ENCODE measurements at regions of chr5 and their contacts with region 1.

Region 1: DNA sequence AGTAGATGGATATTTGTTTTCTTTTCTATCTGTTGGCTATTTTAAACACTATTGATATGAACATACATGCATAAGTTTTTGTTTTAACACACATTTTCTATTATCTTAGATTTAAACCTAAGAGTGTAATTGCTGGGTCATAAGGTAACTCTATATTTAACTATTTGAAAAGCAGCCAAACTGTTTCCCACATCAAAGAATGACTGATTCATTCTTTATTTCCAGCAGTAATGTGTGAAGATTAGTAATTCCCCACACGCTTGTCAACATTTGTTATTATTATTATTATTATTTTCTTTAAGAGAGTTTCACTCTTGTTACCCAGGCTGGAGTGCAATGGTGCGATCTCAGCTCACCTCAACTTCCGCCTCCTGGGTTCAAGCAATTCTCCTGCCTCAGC is 1495.8 kb downstream of the EFNA5 start:
- DNase-seq: no peak
- ATAC-seq: no peak
- H3K4me3 ChIP-seq: no peak overlapping the region
- H3K4me3 Mint-ChIP-seq: no peak overlapping the region
- H3K27ac ChIP-seq: no peak overlapping the region
- H3K27ac Mint-ChIP-seq: no peak overlapping the region
- H3K4me1 ChIP-seq: no peaks in the 10 kb centered on the region
- H3K4me1 Mint-ChIP-seq: no peaks in the 10 kb centered on the region
- H3K27me3 ChIP-seq: no peaks in the 10 kb centered on the region
- H3K27me3 Mint-ChIP-seq: no peaks in the 10 kb centered on the region
- CTCF ChIP-seq: no peak

Region 2: GRCh38 chr5:105993027-105993426 is 181.9 kb before region 1 on chr5:
- CTCF ChIA-PET with region 1: no interaction called
- POLR2A ChIA-PET with region 1: no interaction called
- intact Hi-C with region 1: no loop called
- DNase-seq: no peak
- ATAC-seq: no peak
- H3K4me3 ChIP-seq: no peak overlapping the region
- H3K4me3 Mint-ChIP-seq: no peak overlapping the region
- H3K27ac ChIP-seq: no peak overlapping the region
- H3K27ac Mint-ChIP-seq: no peak overlapping the region
- H3K4me1 ChIP-seq: no peaks in the 10 kb centered on the region
- H3K4me1 Mint-ChIP-seq: no peaks in the 10 kb centered on the region
- H3K27me3 ChIP-seq: no peaks in the 10 kb centered on the region
- H3K27me3 Mint-ChIP-seq: no peaks in the 10 kb centered on the region
- CTCF ChIP-seq: no peak

Region 3: GRCh38 chr5:107408564-107408963 is 1233.7 kb after region 1 on chr5:
- CTCF ChIA-PET with region 1: no interaction called
- POLR2A ChIA-PET with region 1: no interaction called
- intact Hi-C with region 1: loop called in 1 of 2 experiments (anchors 5 kb)
- DNase-seq: no peak
- ATAC-seq: no peak
- H3K4me3 ChIP-seq: no peak overlapping the region
- H3K4me3 Mint-ChIP-seq: no peak overlapping the region
- H3K27ac ChIP-seq: no peak overlapping the region
- H3K27ac Mint-ChIP-seq: no peak overlapping the region
- H3K4me1 ChIP-seq: no peaks in the 10 kb centered on the region
- H3K4me1 Mint-ChIP-seq: no peaks in the 10 kb centered on the region
- H3K27me3 ChIP-seq: peaks cover 0 to 4% of the 10 kb centered on the region in 2 experiments
- H3K27me3 Mint-ChIP-seq: no peaks in the 10 kb centered on the region
- CTCF ChIP-seq: no peak

Measured in CD4-positive, alpha-beta T cell (primary cell).